ENCODE measurements at regions of chr22 and their contacts with region 1.

Region 1: GRCh38 chr22:43955040-43955882 is at the start of gene SAMM50:
- DNase-seq: peak; percentile 91
- H3K4me3 Mint-ChIP-seq: peak within 1 kb of the TSS; percentile 98
- H3K27ac Mint-ChIP-seq: peak within 1 kb of the TSS; percentile 90
- H3K4me1 Mint-ChIP-seq: peaks cover 21% of the 10 kb centered on the region
- H3K27me3 Mint-ChIP-seq: no peaks in the 10 kb centered on the region
- total RNA-seq, gene SAMM50: 58.6 and 59.0 TPM in 2 replicates

Region 2: DNA sequence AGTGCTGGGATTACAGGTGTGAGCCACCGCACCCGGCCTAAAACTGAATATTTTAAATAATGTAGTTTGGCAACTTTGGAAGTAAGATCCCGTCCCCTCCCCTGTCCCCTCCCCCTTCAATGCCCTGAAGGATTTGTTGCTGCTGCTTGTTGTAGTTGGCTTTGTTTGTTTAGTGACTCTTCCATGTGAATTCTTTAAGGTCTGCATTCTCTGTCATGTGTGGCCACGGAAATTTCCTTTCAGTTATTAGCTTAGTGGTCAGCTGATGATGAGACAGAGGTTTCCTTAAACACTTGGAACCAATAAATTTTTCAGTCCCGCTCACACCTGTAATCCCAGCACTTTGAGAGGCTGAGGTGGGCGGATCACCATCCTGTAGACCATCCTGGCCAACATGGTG is 433.5 kb before region 1 on chr22:
- intact Hi-C with region 1: no loop called
- DNase-seq: no peak
- H3K4me3 Mint-ChIP-seq: no peak overlapping the region
- H3K27ac Mint-ChIP-seq: no peak overlapping the region
- H3K4me1 Mint-ChIP-seq: peaks cover 10% of the 10 kb centered on the region
- H3K27me3 Mint-ChIP-seq: peaks cover 33% of the 10 kb centered on the region

Region 3: DNA sequence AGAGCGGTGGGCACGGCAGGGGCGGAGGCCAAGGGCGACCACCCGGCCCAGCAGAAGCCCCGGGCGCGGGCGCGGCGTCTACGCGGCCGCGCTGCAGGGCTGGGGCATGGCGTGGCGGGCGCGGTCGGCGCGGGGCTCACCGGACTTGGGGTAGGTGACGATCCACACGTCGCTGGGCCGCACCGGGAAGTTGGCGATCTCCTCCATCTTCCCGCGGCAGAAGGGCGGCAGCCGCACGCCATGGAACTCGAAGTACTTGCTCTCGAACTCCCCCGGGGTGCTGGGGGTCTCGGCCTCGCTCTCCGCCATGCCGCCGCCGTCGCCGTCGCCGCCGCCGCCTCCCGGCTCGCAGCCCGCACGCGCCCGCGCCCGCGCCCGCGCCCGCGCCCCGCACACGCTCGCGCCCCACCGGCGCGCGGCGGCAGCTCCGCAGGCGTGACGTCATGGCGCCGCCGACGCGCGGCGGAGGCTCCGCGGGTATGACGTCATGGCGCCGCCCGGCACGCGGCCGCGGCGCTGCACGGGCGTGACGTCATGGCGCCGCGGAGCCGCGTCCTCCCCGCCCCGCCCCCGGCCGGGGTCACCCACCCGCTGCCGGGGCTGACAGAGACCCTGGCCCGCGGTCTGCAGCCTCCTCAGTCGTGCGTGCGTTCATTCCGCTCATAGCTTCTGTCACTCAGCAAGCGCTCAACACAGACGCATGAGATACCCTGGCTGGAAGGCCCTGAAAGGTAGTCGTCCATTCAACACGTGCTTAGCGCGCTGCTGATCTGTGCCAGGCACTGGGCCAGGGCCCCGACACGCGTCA is 93.0 kb before region 1 on chr22 and contains the start of gene SULT4A1:
- intact Hi-C with region 1: no loop called
- DNase-seq: no peak
- H3K4me3 Mint-ChIP-seq: no peak within 1 kb of the TSS
- H3K27ac Mint-ChIP-seq: no peak within 1 kb of the TSS
- H3K4me1 Mint-ChIP-seq: no peaks in the 10 kb centered on the region
- H3K27me3 Mint-ChIP-seq: peaks cover 21% of the 10 kb centered on the region
- total RNA-seq, gene SULT4A1: not detected in 2 replicates

Region 4: GRCh38 chr22:44026630-44027511 is 71.6 kb after region 1 on chr22:
- intact Hi-C with region 1: loop called (anchors 10 kb)
- DNase-seq: peak; percentile 70
- H3K4me3 Mint-ChIP-seq: peak overlapping the region; percentile 89
- H3K27ac Mint-ChIP-seq: peak overlapping the region; percentile 98
- H3K4me1 Mint-ChIP-seq: peaks cover 51% of the 10 kb centered on the region
- H3K27me3 Mint-ChIP-seq: no peaks in the 10 kb centered on the region

Measured in activated T-helper 2 cell treated with anti-CD3 and anti-CD28 coated beads, Interferon-gamma antibody, Interleukin-2, Interleukin-4, amounts not matched to agents 10 μg/mL and 5 μg/mL and 100 μg/mL, durations not matched to agents 14 hours and 24 hours and 36 hours (primary cell).